Upper lobe of right lung (tissue), 1 donor: ENCODE measurements at regions of chrX and their contacts with region 1.

Region 1: GRCh38 chrX:119067023-119067739 is 5.6 kb upstream of the CT47C1 start:
- DNase-seq: no peak
- ATAC-seq: peak; percentile 92
- H3K4me3 ChIP-seq: no peak overlapping the region
- H3K27ac ChIP-seq: no peak overlapping the region
- H3K4me1 ChIP-seq: no peaks in the 10 kb centered on the region
- H3K27me3 ChIP-seq: no peaks in the 10 kb centered on the region
- CTCF ChIP-seq: peak; percentile 60

Region 2: GRCh38 chrX:118847676-118848075 is 219.5 kb before region 1 on chrX:
- intact Hi-C with region 1: loop called (anchors 5 kb)
- DNase-seq: no peak
- ATAC-seq: peak; percentile 77
- H3K4me3 ChIP-seq: no peak overlapping the region
- H3K27ac ChIP-seq: no peak overlapping the region
- H3K4me1 ChIP-seq: no peaks in the 10 kb centered on the region
- H3K27me3 ChIP-seq: no peaks in the 10 kb centered on the region
- CTCF ChIP-seq: peak; percentile 60